Activated CD4-positive, alpha-beta memory T cell treated with anti-CD3 and anti-CD28 coated beads for 36 hours (primary cell): ENCODE measurements at regions of chr1 and their contacts with region 1.

Region 1: DNA sequence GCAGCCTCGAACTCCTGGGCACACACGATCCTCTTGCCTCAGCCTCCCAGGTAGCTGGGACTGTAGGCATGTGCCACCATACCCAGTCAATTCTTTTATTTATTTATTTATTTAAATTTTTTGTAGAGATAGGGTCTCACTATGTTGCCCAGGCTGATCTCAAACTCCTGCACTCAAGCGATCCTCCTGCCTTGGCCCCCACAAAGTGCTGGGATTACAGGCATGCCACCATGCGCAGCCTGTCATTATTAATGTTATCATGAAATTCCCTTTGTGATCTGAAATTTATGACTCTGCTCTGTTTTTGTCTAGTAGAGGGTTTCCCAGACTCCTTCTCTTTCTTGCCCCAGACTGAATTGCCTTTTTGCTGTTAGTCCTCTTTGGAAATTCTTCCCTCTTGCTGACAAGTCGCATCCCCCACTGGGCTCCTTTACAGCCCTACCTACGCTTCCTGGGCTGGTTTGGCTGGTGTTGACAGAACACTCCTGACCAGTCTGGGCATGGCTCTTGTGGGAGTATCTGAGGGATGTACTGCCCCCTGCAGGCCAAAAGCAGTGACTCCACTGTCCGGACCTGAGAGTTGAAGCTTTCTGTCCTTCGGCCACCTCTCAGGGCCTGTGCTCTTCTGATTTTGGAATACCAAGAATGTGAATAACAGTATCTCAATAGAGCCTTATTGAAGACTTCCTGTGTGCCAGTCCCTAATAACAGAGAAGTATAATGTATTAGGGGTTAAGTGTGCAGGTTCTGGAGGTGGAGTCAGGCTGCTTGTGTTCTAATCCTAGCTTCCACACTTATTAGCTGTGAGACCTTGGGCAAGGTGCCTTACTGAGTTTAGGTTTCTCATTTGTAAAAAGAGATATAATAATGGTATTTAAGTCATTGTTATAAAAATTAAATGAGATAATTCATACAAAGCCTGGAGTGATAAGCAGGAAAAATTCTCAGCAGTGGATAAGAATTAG is 28.2 kb downstream of the TCEANC2 start:
- DNase-seq: peak; percentile 77
- H3K4me3 Mint-ChIP-seq: no peak overlapping the region
- H3K27ac Mint-ChIP-seq: no peak overlapping the region
- H3K4me1 Mint-ChIP-seq: peaks cover 5% of the 10 kb centered on the region
- H3K27me3 Mint-ChIP-seq: no peaks in the 10 kb centered on the region

Region 2: GRCh38 chr1:54064299-54064698 is 17.3 kb before region 1 on chr1:
- CTCF ChIA-PET with region 1: interaction called, 11 read pairs
- POLR2A ChIA-PET with region 1: interaction called, 4 read pairs
- intact Hi-C with region 1: no loop called
- DNase-seq: no peak
- H3K4me3 Mint-ChIP-seq: no peak overlapping the region
- H3K27ac Mint-ChIP-seq: no peak overlapping the region
- H3K4me1 Mint-ChIP-seq: no peaks in the 10 kb centered on the region
- H3K27me3 Mint-ChIP-seq: no peaks in the 10 kb centered on the region

Region 3: DNA sequence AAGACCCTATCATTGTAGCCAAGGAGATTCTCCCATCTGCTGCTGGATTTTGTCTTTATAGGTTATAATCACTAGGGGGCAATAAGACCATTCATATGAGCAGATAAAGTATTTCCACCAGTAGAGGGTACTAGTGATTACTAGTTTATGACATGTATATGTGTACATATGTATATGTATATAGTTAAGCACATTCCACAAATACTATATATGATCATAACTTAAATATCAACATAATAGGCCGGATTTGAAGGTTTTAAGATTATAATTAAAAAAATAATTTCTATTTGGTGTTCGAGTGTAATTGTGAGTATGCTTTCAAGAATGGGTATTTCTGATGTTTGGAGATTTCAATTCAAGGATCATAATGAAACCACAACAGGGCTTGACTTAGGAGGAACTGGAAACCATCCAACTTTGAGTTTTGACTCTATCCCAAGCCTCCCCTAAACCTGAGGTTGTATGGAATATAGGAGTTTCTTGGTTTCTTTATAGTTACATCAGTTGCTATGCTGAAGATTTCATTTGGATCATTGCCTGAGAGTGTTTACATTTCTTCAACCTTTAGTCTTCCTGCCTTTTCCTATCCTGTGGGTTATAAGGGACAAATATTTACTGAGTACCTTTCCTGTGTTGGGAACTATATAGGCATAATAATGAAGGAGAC is 11.3 kb before region 1 on chr1:
- CTCF ChIA-PET with region 1: interaction called, 27 read pairs
- POLR2A ChIA-PET with region 1: no interaction called
- intact Hi-C with region 1: no loop called
- DNase-seq: no peak
- H3K4me3 Mint-ChIP-seq: no peak overlapping the region
- H3K27ac Mint-ChIP-seq: no peak overlapping the region
- H3K4me1 Mint-ChIP-seq: no peaks in the 10 kb centered on the region
- H3K27me3 Mint-ChIP-seq: no peaks in the 10 kb centered on the region

Region 4: DNA sequence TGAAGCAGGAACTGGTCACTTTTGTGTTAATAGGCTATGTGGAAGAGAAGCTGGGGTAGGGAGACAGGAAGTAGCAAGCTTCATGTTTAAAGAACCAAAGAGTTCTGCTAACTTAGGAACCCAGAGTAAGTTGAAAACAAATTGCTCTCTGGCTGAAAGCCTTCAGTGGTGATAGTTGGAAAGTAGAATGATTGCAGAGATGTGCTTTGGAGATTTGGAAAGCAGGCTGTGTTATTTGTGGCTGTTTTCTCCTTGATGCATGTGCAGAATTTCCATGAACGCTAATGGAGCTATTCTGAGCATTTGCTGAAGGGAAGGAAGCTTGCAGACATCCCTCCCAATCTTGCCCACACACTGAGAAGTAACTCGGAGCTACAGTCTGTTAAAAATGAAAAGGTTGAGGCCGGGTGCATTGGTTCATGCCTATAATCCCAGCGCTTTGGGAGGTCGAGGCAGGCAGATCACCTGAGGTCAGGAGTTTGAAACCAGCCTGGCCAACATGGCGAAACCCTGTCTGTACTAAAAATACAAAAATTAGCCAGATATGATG is 17.5 kb after region 1 on chr1:
- CTCF ChIA-PET with region 1: interaction called, 10 read pairs
- POLR2A ChIA-PET with region 1: no interaction called
- intact Hi-C with region 1: no loop called
- DNase-seq: no peak
- H3K4me3 Mint-ChIP-seq: no peak overlapping the region
- H3K27ac Mint-ChIP-seq: no peak overlapping the region
- H3K4me1 Mint-ChIP-seq: no peaks in the 10 kb centered on the region
- H3K27me3 Mint-ChIP-seq: no peaks in the 10 kb centered on the region